Activated CD8-positive, alpha-beta memory T cell treated with anti-CD3 and anti-CD28 coated beads, Interleukin-2, amount 10 ng/mL, durations not matched to agents 7 days and 5 days (primary cell): ENCODE measurements at regions of chr2 and their contacts with region 1.

Region 1: DNA sequence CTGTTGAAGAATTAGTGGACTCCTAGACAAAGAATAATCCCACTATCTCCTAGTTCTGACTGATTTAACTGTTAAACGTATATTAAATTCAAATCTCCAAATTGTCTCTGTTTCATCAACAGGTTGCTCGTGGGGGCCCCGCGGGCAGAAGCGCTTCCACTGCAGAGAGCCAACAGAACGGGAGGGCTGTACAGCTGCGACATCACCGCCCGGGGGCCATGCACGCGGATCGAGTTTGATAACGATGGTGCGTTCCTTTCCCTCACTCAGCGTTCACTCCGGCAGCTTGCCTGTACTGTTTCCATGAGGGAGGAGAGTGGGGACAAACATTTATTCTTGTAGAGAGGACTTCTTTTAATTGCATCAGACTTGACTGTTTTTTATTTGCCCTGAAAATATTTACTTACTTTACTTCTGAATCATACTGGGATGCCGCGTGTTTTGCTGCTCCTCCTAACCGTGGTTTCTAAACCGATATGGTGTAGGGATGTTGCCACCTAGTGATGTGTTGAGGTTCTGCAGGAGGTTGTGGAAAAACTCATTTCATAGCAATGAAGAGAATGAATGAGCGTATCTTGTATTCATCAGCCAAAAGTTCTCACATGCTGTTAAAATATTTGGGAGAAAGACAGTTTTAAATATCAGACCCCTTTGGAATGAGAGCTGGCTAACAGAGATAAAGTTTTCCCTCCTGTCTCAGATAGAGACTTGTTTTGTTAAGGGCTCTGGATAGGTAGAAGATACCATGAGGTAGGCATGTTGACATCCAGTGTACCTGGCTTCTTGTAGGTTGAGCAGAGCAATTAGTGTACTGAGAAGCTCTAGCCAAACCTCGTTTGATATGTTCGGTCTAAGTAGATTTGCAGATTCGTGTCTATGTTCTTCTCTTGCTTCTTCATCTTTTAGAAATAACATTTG is 38.3 kb downstream of the ITGA6 start:
- DNase-seq: peak; percentile 86
- ATAC-seq: peak; percentile 29
- H3K4me3 Mint-ChIP-seq: peak overlapping the region; percentile 14
- H3K27ac Mint-ChIP-seq: peak overlapping the region; percentile 39
- H3K4me1 Mint-ChIP-seq: peaks cover 65% of the 10 kb centered on the region
- H3K27me3 Mint-ChIP-seq: peaks cover 5% of the 10 kb centered on the region

Region 2: DNA sequence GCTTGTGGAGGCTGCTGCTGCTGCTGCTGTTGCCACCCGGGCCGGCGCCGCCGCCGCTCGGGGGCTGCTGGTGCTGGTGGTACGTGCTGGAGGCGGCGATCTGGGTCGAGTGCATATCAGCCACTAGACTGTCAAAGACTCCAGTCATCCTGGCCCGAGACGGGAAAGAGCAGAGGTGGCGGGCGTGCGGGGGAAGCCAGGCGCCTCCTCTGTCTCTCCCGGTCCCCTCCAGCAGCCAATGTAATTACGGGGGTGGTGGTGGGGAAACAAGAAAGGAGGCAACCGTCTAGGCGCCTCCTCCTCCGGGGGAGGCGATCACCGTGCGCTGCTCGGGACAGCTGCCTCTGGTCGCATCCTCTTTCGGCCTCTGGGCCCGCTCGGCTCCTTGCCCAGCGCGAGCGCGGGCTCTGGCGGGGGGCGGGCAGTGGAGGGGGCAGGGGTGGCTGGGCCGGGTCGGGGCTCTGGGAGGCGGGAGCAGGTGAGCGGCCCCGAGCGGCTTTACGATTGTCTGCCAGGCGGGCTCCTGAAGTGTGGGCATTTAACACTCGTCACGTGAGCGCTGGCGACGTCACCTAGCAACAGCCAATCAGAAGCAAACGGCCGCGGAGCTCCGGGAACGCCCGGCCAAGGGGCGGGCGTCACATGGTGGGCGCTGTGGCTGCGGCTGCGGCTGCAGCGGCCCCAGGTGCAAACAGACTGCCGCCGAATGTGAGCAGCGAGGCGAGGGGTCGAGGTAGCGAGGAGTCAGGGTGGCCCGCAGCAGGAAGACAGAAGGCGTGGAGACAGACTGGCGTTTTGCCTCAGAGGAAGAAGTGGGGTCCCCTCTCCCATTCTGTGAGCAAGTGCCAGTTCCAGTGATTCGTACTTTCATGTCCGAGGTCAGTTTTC is 363.0 kb before region 1 on chr2 and contains the start of gene DLX2:
- CTCF ChIA-PET with region 1: interaction called, 10 read pairs
- DNase-seq: peak; percentile 84
- ATAC-seq: peak; percentile 64
- H3K4me3 Mint-ChIP-seq: peak within 1 kb of the TSS; percentile 67
- H3K27ac Mint-ChIP-seq: peak within 1 kb of the TSS; percentile 63
- H3K4me1 Mint-ChIP-seq: peaks cover 54% of the 10 kb centered on the region
- H3K27me3 Mint-ChIP-seq: peaks cover 83% of the 10 kb centered on the region
- total RNA-seq, gene DLX2: 0.12 TPM in 1 of 2 experiments, not detected in the other

Region 3: DNA sequence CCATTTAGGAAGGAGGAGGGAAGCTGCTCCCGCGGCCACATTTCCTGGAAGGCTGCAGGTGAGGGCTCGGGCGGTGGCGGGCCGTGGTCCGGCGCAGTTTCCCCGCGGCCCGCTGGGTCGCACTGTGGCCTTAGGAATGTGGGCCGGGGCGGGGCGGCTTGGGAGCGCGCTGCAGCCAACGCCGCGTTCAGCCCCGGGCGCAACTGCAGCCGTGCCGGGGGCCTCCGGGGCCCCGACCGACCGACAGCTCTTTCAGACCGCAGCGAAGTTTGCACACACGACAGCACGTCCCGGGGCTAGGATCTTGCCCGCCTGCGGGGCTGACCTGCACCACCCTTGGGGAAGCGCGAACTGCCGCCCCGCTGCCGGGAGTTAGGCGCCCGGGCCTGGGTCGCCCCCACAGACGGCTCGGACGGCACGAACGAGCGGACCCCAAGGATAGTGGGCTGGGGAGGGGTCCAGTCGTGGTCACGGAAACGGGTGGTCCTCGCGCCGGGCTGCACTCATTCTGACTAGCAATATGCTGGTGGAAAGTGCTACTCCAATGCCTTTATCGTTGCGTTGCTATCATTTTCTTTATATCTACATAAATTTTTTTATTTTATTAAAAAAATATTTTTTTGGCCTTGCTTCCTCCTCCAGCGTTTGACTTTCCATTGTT is 293.0 kb before region 1 on chr2:
- CTCF ChIA-PET with region 1: interaction called, 97 read pairs
- DNase-seq: peak; percentile 58
- ATAC-seq: peak; percentile 96
- H3K4me3 Mint-ChIP-seq: peak overlapping the region; percentile 52
- H3K27ac Mint-ChIP-seq: no peak overlapping the region
- H3K4me1 Mint-ChIP-seq: peaks cover 1% of the 10 kb centered on the region
- H3K27me3 Mint-ChIP-seq: peaks cover 39% of the 10 kb centered on the region

Region 4: GRCh38 chr2:172200495-172201085 is 265.1 kb before region 1 on chr2:
- CTCF ChIA-PET with region 1: interaction called, 14 read pairs
- DNase-seq: no peak
- ATAC-seq: no peak
- H3K4me3 Mint-ChIP-seq: no peak overlapping the region
- H3K27ac Mint-ChIP-seq: no peak overlapping the region
- H3K4me1 Mint-ChIP-seq: peaks cover 8% of the 10 kb centered on the region
- H3K27me3 Mint-ChIP-seq: peaks cover 26% of the 10 kb centered on the region

Region 5: DNA sequence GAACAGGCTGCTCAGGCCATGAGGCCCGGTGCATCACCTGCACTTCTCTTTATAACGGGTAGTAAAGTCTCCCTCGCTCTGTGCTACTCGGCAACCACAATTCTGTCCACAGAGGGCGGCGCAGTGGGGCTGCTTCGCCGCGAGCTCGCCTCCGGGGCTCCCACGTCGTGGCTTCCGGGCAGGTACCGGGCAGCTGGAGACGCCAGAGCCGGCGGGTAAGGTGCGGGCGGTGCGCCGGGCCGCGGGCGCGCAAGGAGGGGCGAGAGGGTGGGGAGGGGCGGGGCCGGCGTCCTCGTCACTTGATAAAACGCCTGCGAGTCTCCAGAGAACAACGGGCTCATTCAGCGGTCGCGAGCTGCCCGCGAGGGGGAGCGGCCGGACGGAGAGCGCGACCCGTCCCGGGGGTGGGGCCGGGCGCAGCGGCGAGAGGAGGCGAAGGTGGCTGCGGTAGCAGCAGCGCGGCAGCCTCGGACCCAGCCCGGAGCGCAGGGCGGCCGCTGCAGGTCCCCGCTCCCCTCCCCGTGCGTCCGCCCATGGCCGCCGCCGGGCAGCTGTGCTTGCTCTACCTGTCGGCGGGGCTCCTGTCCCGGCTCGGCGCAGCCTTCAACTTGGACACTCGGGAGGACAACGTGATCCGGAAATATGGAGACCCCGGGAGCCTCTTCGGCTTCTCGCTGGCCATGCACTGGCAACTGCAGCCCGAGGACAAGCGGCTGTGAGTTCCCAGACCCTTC is 38.3 kb before region 1 on chr2 and contains the start of gene ITGA6:
- CTCF ChIA-PET with region 1: interaction called, 137 read pairs
- DNase-seq: peak; percentile 72
- ATAC-seq: peak; percentile 80
- H3K4me3 Mint-ChIP-seq: peak within 1 kb of the TSS; percentile 68
- H3K27ac Mint-ChIP-seq: no peak within 1 kb of the TSS
- H3K4me1 Mint-ChIP-seq: peaks cover 15% of the 10 kb centered on the region
- H3K27me3 Mint-ChIP-seq: peaks cover 76% of the 10 kb centered on the region
- total RNA-seq, gene ITGA6: 2.2 to 5.5 TPM

Region 6: DNA sequence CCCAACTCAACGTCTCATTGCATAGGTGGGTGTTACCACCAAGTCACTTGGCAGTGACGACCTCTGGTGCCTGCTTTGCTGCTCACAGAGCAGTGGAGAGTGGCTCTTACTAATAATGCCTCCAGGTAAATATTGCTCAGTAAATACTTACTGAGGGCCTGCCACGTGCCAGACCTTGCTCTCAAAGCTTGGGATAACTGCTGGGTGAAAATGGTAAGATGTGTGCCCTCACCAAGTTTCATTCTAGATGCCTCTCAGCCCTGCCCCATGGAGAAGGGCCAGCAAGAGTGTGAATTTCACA is 10.5 kb before region 1 on chr2:
- CTCF ChIA-PET with region 1: interaction called, 40 read pairs
- DNase-seq: no peak
- ATAC-seq: no peak
- H3K4me3 Mint-ChIP-seq: no peak overlapping the region
- H3K27ac Mint-ChIP-seq: no peak overlapping the region
- H3K4me1 Mint-ChIP-seq: peaks cover 9% of the 10 kb centered on the region
- H3K27me3 Mint-ChIP-seq: peaks cover 3% of the 10 kb centered on the region

Region 7: DNA sequence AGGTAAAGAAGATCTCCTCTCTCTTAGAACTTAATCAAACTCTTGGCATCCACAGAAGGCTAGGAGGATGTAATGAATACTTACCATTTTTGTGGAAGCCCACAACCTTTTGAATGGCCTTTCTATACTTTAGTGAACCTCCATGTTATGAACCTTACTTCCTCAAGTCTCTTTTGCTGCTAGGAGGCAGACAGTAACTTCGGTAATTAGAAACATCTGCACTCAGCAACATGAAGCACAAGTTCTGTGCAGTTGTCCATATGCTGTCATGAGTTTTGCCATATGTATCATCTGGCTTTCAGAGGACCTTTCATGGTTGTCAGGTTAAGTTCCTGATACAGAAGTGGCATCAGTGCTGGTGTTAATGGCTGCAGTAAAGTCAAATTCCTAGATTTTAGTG is 140.6 kb after region 1 on chr2:
- CTCF ChIA-PET with region 1: no interaction called
- DNase-seq: no peak
- ATAC-seq: no peak
- H3K4me3 Mint-ChIP-seq: no peak overlapping the region
- H3K27ac Mint-ChIP-seq: no peak overlapping the region
- H3K4me1 Mint-ChIP-seq: no peaks in the 10 kb centered on the region
- H3K27me3 Mint-ChIP-seq: no peaks in the 10 kb centered on the region

Region 8: GRCh38 chr2:172655091-172655837 is 189.6 kb after region 1 on chr2:
- CTCF ChIA-PET with region 1: no interaction called
- DNase-seq: no peak
- ATAC-seq: no peak
- H3K4me3 Mint-ChIP-seq: no peak overlapping the region
- H3K27ac Mint-ChIP-seq: no peak overlapping the region
- H3K4me1 Mint-ChIP-seq: no peaks in the 10 kb centered on the region
- H3K27me3 Mint-ChIP-seq: no peaks in the 10 kb centered on the region